Activated CD4-positive, alpha-beta T cell treated with anti-CD3 and anti-CD28 coated beads for 36 hours (primary cell): ENCODE measurements at regions of chr1 and their contacts with region 1.

Region 1: GRCh38 chr1:6701437-6702153 is at the start of gene DNAJC11:
- DNase-seq: peak; percentile 93
- ATAC-seq: peak; percentile 98
- H3K4me3 Mint-ChIP-seq: peak within 1 kb of the TSS; percentile 90
- H3K27ac Mint-ChIP-seq: peak within 1 kb of the TSS; percentile 92
- H3K4me1 Mint-ChIP-seq: peaks cover 28% of the 10 kb centered on the region
- H3K27me3 Mint-ChIP-seq: no peaks in the 10 kb centered on the region
- total RNA-seq, gene DNAJC11: 53.2 to 62.0 TPM

Region 2: DNA sequence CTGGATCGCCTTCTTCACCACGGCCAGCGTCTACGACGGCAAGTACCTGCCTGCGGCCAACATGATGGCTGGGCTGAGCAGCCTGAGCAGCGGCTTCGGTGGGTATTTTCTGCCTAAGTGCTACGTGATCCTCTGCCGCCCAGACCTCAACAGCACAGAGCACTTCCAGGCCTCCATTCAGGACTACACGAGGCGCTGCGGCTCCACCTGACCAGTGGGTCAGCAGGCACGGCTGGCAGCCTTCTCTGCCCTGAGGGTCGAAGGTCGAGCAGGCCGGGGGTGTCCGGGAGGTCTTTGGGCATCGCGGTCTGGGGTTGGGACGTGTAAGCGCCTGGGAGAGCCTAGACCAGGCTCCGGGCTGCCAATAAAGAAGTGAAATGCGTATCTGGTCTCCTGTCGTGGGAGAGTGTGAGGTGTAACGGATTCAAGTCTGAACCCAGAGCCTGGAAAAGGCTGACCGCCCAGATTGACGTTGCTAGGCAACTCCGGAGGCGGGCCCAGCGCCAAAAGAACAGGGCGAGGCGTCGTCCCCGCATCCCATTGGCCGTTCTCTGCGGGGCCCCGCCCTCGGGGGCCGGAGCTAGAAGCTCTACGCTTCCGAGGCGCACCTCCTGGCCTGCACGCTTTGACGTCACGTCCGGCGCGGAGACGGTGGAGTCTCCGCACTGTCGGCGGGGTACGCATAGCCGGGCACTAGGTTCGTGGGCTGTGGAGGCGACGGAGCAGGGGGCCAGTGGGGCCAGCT is 122.0 kb before region 1 on chr1 and contains the start of gene ZBTB48:
- CTCF ChIA-PET with region 1: no interaction called
- POLR2A ChIA-PET with region 1: no interaction called
- intact Hi-C with region 1: loop called in 1 of 2 experiments (anchors 1 kb)
- DNase-seq: peak; percentile 99
- ATAC-seq: peak; percentile 99
- H3K4me3 Mint-ChIP-seq: peak within 1 kb of the TSS; percentile 92
- H3K27ac Mint-ChIP-seq: peak within 1 kb of the TSS; percentile 89
- H3K4me1 Mint-ChIP-seq: peaks cover 30% of the 10 kb centered on the region
- H3K27me3 Mint-ChIP-seq: no peaks in the 10 kb centered on the region
- total RNA-seq, gene ZBTB48: 23.2 to 26.0 TPM

Region 3: DNA sequence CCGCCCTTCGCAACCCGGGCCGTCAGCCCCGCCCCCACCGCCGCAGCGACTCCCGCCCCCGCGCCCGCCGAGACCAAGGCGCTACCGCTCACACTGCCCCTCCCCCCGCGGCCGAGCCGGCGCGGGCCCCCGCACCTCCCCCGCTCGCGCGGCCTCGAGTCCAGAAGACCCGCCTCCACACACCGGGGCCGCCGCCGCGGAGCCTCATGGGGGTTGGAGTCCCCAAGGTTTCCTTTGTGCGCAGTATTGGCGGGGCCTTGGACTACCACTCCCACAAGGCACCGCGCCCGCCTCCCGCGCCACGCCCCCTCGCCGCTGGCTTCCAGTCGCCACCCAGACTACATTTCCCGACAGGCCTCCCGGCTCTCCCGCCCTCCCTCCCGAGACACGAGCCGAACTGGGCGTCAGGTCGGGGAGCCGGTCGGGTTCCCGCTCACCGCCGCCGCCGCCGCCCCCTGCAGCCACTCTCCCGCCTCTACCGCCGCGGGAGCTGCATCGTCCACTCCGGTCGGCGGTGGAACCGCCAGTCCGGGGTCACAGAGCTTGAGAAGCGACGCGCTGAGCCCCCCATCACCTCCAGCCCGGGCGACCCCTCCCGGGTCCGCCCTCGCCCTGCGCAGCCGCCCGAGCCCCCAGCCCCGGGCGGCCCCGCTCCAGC is 88.1 kb before region 1 on chr1 and contains the start of gene PHF13:
- CTCF ChIA-PET with region 1: no interaction called
- POLR2A ChIA-PET with region 1: no interaction called
- intact Hi-C with region 1: loop called in 1 of 2 experiments (anchors 1 kb)
- DNase-seq: peak; percentile 100
- ATAC-seq: peak; percentile 98
- H3K4me3 Mint-ChIP-seq: peak within 1 kb of the TSS; percentile 80
- H3K27ac Mint-ChIP-seq: peak within 1 kb of the TSS; percentile 87
- H3K4me1 Mint-ChIP-seq: peaks cover 20% of the 10 kb centered on the region
- H3K27me3 Mint-ChIP-seq: no peaks in the 10 kb centered on the region
- total RNA-seq, gene PHF13: 13.2 to 13.6 TPM

Region 4: DNA sequence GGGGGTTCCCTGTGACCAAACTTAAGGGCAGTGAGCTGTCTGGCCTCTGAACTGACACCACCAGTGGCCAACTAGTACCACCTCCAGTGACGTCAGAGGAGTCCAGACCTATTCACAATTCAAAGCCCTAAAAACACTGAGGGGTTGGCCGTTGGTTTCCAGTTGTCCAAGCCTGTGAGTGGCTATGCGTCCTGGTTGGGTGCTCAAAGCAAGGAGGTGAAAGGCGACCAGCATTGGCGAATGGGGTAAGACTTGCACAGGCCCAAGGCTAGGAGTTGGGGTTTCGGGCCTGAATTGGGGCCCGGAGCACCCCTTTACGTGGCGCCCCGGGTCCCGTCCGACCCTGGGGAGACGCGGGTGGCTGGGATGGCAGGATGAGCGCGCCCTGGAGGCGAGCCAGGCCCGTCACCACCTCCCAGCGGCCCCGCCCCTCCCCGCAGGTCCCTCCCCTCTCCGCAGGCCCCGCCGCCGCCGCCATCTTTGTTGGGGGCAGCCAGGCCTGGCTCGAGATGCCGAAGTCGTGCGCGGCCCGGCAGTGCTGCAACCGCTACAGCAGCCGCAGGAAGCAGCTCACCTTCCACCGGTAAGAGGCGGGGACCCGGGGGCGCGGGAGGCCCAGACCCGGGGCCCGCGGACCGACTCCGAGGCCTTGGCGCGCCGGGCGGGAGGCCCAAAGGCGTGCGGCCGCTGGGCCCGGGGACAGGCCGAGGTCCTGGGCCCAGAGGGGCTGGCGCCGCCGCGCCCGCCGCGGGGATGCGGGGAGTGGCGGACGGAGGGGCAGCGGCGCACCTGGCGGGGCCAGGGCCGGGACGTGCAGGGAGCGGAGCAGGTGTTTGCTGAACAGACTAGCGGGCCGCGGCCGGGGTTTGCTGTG is 76.6 kb before region 1 on chr1 and contains the start of gene THAP3:
- CTCF ChIA-PET with region 1: no interaction called
- POLR2A ChIA-PET with region 1: interaction called, 4 read pairs
- intact Hi-C with region 1: loop called in 1 of 2 experiments (anchors 1 kb)
- DNase-seq: peak; percentile 96
- ATAC-seq: peak; percentile 98
- H3K4me3 Mint-ChIP-seq: peak within 1 kb of the TSS; percentile 85
- H3K27ac Mint-ChIP-seq: peak within 1 kb of the TSS; percentile 78
- H3K4me1 Mint-ChIP-seq: peaks cover 28% of the 10 kb centered on the region
- H3K27me3 Mint-ChIP-seq: no peaks in the 10 kb centered on the region
- total RNA-seq, gene THAP3: 19.4 to 22.1 TPM

Region 5: GRCh38 chr1:6743189-6744101 is 41.9 kb after region 1 on chr1:
- CTCF ChIA-PET with region 1: no interaction called
- POLR2A ChIA-PET with region 1: no interaction called
- intact Hi-C with region 1: no loop called
- DNase-seq: peak; percentile 50
- ATAC-seq: peak; percentile 42
- H3K4me3 Mint-ChIP-seq: no peak overlapping the region
- H3K27ac Mint-ChIP-seq: no peak overlapping the region
- H3K4me1 Mint-ChIP-seq: peaks cover 16% of the 10 kb centered on the region
- H3K27me3 Mint-ChIP-seq: peaks cover 18% of the 10 kb centered on the region

Region 6: GRCh38 chr1:7770997-7771822 is 1069.6 kb after region 1 on chr1 and contains the start of gene VAMP3:
- CTCF ChIA-PET with region 1: no interaction called
- POLR2A ChIA-PET with region 1: no interaction called
- intact Hi-C with region 1: loop called in 1 of 2 experiments (anchors 1 kb)
- DNase-seq: peak; percentile 94
- ATAC-seq: peak; percentile 90
- H3K4me3 Mint-ChIP-seq: peak within 1 kb of the TSS; percentile 80
- H3K27ac Mint-ChIP-seq: peak within 1 kb of the TSS; percentile 72
- H3K4me1 Mint-ChIP-seq: peaks cover 21% of the 10 kb centered on the region
- H3K27me3 Mint-ChIP-seq: peaks cover 6% of the 10 kb centered on the region
- total RNA-seq, gene VAMP3: 16.8 to 17.4 TPM